ENCODE measurements at regions of chr1 and their contacts with region 1.

Region 1: GRCh38 chr1:21956720-21957552 is 19.8 kb upstream of the HSPG2 start:
- DNase-seq: peak; percentile 91 to 95
- H3K4me3 ChIP-seq: no peak overlapping the region
- H3K27ac ChIP-seq: peak overlapping the region; percentile 28 to 76 (median 32)
- H3K4me1 ChIP-seq: peaks cover 17 to 29% of the 10 kb centered on the region in 2 donors
- H3K27me3 ChIP-seq: no peaks in the 10 kb centered on the region
- CTCF ChIP-seq: peak in 1 of 6 experiments; percentile 8
- POLR2A ChIP-seq: peak in 1 of 2 donors; percentile 12

Region 2: DNA sequence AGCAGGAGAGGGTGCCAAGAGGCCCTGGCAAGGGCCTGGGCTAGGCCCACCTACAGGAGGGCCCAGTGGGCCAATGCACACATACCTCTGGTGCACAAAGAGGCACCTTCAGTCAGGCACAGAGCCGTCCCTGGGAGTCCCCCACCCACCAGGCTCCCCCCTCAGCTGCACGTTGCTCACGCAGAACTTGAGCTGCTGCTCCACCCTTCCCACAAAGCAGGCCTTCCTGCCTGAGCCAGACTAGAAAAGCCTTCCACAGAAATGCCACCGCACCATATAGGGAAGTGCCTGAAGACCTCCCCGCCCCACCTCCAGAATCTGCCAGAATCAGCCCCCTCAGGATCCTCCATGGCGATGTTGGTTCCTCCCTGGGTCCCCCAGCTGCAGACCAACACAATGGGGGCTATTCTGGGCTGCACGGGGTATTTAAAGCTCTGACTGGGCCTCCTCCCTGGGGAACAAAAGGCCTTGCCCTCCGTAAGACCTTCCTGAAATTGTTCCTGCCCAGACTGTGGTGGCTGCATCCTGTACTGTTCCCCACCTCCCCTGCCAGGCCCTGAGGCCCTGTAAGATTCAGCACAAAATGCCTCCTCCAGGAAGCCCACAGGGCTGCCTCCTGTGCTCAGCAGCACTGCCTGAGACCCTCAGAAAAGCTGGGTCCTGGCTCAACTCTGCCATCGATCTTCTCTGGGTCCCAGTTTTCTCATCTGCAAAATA is 47.0 kb before region 1 on chr1:
- intact Hi-C with region 1: loop called (anchors 5 kb)
- DNase-seq: peak; percentile 61 to 69
- H3K4me3 ChIP-seq: no peak overlapping the region
- H3K27ac ChIP-seq: peak overlapping the region; percentile 72 to 81 (median 72)
- H3K4me1 ChIP-seq: peaks cover 50 to 92% of the 10 kb centered on the region in 2 donors
- H3K27me3 ChIP-seq: no peaks in the 10 kb centered on the region
- CTCF ChIP-seq: no peak
- POLR2A ChIP-seq: no peak

Region 3: GRCh38 chr1:22303816-22304215 is 346.9 kb after region 1 on chr1:
- intact Hi-C with region 1: no loop called
- DNase-seq: no peak
- H3K4me3 ChIP-seq: no peak overlapping the region
- H3K27ac ChIP-seq: no peak overlapping the region
- H3K4me1 ChIP-seq: no peaks in the 10 kb centered on the region
- H3K27me3 ChIP-seq: no peaks in the 10 kb centered on the region
- CTCF ChIP-seq: no peak
- POLR2A ChIP-seq: no peak